Uterus (tissue), 4 donors: ENCODE measurements at regions of chr9 and their contacts with region 1.

Region 1: GRCh38 chr9:22529426-22530199 is 83.0 kb downstream of the DMRTA1 start:
- DNase-seq: no peak
- H3K4me3 ChIP-seq: no peak overlapping the region
- H3K27ac ChIP-seq: no peak overlapping the region
- H3K4me1 ChIP-seq: no peaks in the 10 kb centered on the region
- H3K27me3 ChIP-seq: no peaks in the 10 kb centered on the region
- CTCF ChIP-seq: no peak
- POLR2A ChIP-seq: no peak

Region 2: GRCh38 chr9:22446950-22447617 is 82.5 kb before region 1 on chr9:
- intact Hi-C with region 1: no loop called
- DNase-seq: peak in 1 of 2 donors; percentile 40
- H3K4me3 ChIP-seq: peak overlapping the region; percentile 52 to 65
- H3K27ac ChIP-seq: peak overlapping the region; percentile 73 to 82
- H3K4me1 ChIP-seq: no peaks in the 10 kb centered on the region
- H3K27me3 ChIP-seq: peaks cover 0 to 6% of the 10 kb centered on the region in 2 donors
- CTCF ChIP-seq: no peak
- POLR2A ChIP-seq: peak in 1 of 2 donors; percentile 14

Region 3: DNA sequence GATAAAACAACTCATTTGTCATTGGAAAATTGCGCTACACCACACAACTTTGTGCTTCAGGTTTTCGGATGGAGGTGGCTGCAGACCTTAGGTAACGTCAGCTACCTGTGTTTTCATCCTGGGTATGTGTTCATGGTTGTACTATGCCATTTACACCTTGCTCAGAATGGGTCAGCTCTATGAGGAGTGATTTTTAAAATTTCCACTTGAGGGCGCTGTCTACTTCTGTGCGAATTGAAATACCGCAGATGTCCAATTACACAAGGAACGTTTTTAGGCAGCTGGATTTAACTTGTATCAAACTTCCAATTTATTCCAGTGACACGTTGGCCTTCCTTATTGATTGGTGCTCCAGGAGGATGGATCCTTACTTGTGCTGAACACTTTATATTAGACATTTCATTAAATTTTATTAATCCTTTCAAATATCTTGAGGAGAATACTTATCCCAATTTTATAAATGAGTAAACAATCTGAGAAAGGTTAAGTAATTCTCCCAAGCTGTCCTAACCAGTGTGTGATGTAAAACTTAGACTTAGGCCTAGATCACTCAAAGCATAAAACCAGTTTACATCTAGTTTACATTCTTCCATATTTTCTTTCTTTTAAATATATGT is 59.6 kb before region 1 on chr9:
- intact Hi-C with region 1: loop called (anchors 10 kb)
- DNase-seq: no peak
- H3K4me3 ChIP-seq: no peak overlapping the region
- H3K27ac ChIP-seq: no peak overlapping the region
- H3K4me1 ChIP-seq: no peaks in the 10 kb centered on the region
- H3K27me3 ChIP-seq: no peaks in the 10 kb centered on the region
- CTCF ChIP-seq: peak in 3 of 4 experiments; percentile 17 to 54 (median 33)
- POLR2A ChIP-seq: no peak

Region 4: DNA sequence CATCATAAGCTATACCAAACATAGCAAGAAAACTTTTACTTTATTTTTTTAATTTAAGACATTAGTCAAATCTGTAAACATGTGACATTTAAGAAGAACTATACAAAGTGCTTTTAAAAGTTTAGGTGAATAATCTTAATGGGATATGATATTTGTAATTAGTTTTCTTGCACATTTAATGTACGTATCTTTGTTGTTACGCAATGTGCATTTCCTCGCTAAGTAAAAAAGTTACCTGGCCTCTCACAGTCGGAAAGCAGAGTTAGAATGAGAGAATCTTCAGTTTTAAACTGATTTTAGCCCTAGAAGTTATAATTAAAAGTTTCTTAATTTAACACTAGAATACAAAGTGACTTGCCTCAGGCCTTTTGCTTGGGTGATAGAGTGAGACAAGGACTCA is 506.8 kb after region 1 on chr9:
- intact Hi-C with region 1: no loop called
- DNase-seq: no peak
- H3K4me3 ChIP-seq: no peak overlapping the region
- H3K27ac ChIP-seq: no peak overlapping the region
- H3K4me1 ChIP-seq: no peaks in the 10 kb centered on the region
- H3K27me3 ChIP-seq: no peaks in the 10 kb centered on the region
- CTCF ChIP-seq: no peak
- POLR2A ChIP-seq: no peak